ENCODE measurements at regions of chr3 and their contacts with region 1.

Region 1: GRCh38 chr3:106945435-106945834 is 431.8 kb upstream of the CCDC54 start:
- DNase-seq: no peak
- H3K4me3 ChIP-seq: no peak overlapping the region
- H3K27ac ChIP-seq: no peak overlapping the region
- H3K4me1 ChIP-seq: no peaks in the 10 kb centered on the region
- H3K27me3 ChIP-seq: no peaks in the 10 kb centered on the region
- CTCF ChIP-seq: no peak
- POLR2A ChIP-seq: no peak

Region 2: DNA sequence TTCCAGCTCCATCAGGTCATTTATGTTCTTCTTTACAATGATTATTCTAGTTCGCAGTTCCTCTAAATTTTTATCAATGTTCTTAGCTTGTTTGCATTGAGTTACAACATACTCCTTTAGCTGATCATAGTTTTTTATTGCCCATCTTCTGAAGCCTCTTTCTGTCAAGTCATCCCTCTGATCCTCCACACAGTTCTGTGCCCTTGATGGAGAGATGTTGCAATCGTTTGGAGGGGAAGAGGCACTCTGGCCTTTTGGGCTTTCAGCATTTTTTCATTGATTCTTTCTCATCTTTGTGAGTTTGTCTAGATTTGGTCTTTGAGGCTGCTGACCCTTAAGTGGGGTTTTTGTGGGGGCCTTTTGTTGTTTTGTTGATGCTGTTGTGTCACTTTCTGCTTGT is 842.1 kb before region 1 on chr3:
- intact Hi-C with region 1: no loop called
- DNase-seq: no peak
- H3K4me3 ChIP-seq: no peak overlapping the region
- H3K27ac ChIP-seq: no peak overlapping the region
- H3K4me1 ChIP-seq: no peaks in the 10 kb centered on the region
- H3K27me3 ChIP-seq: no peaks in the 10 kb centered on the region
- CTCF ChIP-seq: no peak
- POLR2A ChIP-seq: no peak

Region 3: GRCh38 chr3:106740116-106740515 is 205.3 kb before region 1 on chr3:
- intact Hi-C with region 1: loop called (anchors 5 kb)
- DNase-seq: no peak
- H3K4me3 ChIP-seq: no peak overlapping the region
- H3K27ac ChIP-seq: no peak overlapping the region
- H3K4me1 ChIP-seq: no peaks in the 10 kb centered on the region
- H3K27me3 ChIP-seq: no peaks in the 10 kb centered on the region
- CTCF ChIP-seq: no peak
- POLR2A ChIP-seq: no peak

Region 4: GRCh38 chr3:106963442-106963841 is 18.0 kb after region 1 on chr3:
- intact Hi-C with region 1: loop called (anchors 2 kb)
- DNase-seq: no peak
- H3K4me3 ChIP-seq: no peak overlapping the region
- H3K27ac ChIP-seq: no peak overlapping the region
- H3K4me1 ChIP-seq: no peaks in the 10 kb centered on the region
- H3K27me3 ChIP-seq: no peaks in the 10 kb centered on the region
- CTCF ChIP-seq: no peak
- POLR2A ChIP-seq: no peak

Region 5: DNA sequence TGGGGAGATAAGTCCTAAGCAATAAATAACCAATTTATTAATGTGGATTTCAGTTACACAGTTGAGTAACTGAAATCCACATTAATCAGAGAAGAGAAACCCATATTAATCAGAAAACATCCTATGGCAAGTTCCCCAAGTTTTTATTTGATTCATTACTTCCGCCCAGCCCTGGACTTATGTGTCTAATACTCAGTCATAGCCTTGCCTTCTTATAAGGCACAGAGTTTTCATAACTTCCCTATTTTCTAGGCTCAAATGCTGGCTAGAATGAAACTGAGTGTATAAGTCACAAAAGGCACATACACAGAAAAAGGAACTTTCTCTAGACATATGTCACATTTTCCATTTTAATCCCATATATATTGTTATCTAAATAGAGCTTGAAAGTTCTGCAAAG is 1116.6 kb after region 1 on chr3:
- intact Hi-C with region 1: no loop called
- DNase-seq: no peak
- H3K4me3 ChIP-seq: no peak overlapping the region
- H3K27ac ChIP-seq: no peak overlapping the region
- H3K4me1 ChIP-seq: no peaks in the 10 kb centered on the region
- H3K27me3 ChIP-seq: no peaks in the 10 kb centered on the region
- CTCF ChIP-seq: no peak
- POLR2A ChIP-seq: no peak

Measured in breast epithelium (tissue), 4 donors.